ENCODE measurements at regions of chr10 and their contacts with region 1.

Region 1: DNA sequence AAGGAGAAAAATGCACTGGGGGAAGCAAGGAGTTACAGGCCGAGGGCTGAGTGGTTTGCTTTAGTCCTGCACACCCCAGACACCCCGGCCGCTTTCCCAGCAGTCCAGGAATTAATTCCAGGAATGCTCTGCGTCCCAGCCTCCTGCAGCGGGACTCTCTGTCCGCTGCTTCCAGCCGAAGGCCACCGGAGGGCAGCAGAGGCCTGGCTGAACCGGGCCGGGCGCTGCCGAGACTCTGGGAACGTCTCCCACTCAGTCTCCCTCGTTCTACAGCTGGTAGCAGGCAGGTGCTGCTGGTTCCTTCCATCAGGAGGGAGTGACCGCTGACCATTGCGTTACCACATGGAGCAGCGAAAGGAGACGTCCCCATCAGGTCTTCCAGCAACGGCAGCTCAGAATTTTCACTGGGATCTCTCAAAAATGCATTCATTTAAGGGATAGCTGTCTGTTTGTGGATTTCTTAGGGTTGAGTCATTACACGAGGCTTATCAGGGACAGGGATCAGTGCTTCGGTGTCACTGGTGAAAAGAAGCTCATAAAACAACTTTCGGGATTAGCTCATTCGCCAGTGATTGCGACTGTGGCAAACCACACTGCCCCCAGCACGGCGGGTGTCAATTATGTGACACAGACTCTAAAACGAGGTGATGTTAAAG is 24.9 kb upstream of the PITRM1 start:
- DNase-seq: peak; percentile 92
- H3K4me3 ChIP-seq: peak overlapping the region; percentile 26 to 64
- H3K27ac ChIP-seq: peak overlapping the region; percentile 59 to 84
- H3K4me1 ChIP-seq: peaks cover 11 to 12% of the 10 kb centered on the region in 2 experiments
- H3K27me3 ChIP-seq: no peaks in the 10 kb centered on the region
- CTCF ChIP-seq: peak; percentile 92
- EP300 ChIP-seq: peak in 1 of 2 experiments; percentile 92; a peak in 2 of 4 replicates
- RAD21 ChIP-seq: peak; percentile 95

Region 2: GRCh38 chr10:3180355-3181025 is 17.0 kb before region 1 on chr10:
- CTCF ChIA-PET with region 1: interaction called, 12 read pairs
- POLR2A ChIA-PET with region 1: no interaction called
- DNase-seq: no peak
- H3K4me3 ChIP-seq: no peak overlapping the region
- H3K27ac ChIP-seq: no peak overlapping the region
- H3K4me1 ChIP-seq: no peaks in the 10 kb centered on the region
- H3K27me3 ChIP-seq: no peaks in the 10 kb centered on the region; the same call in 1 of the 2 replicates
- CTCF ChIP-seq: no peak
- EP300 ChIP-seq: no peak
- RAD21 ChIP-seq: no peak

Region 3: DNA sequence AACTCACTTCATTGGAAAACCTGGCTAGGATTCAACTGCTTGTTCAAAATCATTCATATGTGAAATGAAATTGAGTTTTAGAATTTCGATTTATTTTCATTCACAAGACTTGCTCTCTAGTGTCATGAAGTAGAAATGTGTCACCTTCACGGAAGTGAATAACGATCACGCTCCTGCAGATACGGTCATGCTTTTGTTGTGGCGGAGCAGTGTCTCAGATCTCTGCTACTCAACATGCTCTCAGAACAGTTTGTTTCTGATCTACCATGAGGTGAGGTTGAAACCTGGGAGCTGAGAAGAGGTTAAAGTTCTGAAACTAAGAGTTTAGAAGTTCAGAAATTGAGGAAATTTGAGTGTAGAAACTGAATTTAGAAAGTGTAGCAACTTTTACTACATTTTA is 11.1 kb before region 1 on chr10:
- CTCF ChIA-PET with region 1: interaction called, 12 read pairs
- POLR2A ChIA-PET with region 1: no interaction called
- DNase-seq: no peak
- H3K4me3 ChIP-seq: no peak overlapping the region
- H3K27ac ChIP-seq: no peak overlapping the region
- H3K4me1 ChIP-seq: no peaks in the 10 kb centered on the region
- H3K27me3 ChIP-seq: no peaks in the 10 kb centered on the region; the same call in 1 of the 2 replicates
- CTCF ChIP-seq: no peak
- EP300 ChIP-seq: no peak
- RAD21 ChIP-seq: no peak

Region 4: GRCh38 chr10:3213208-3213607 is 15.7 kb after region 1 on chr10:
- CTCF ChIA-PET with region 1: interaction called, 21 read pairs
- POLR2A ChIA-PET with region 1: no interaction called
- DNase-seq: no peak
- H3K4me3 ChIP-seq: no peak overlapping the region
- H3K27ac ChIP-seq: no peak overlapping the region
- H3K4me1 ChIP-seq: no peaks in the 10 kb centered on the region
- H3K27me3 ChIP-seq: no peaks in the 10 kb centered on the region
- CTCF ChIP-seq: no peak
- EP300 ChIP-seq: no peak
- RAD21 ChIP-seq: no peak

Region 5: DNA sequence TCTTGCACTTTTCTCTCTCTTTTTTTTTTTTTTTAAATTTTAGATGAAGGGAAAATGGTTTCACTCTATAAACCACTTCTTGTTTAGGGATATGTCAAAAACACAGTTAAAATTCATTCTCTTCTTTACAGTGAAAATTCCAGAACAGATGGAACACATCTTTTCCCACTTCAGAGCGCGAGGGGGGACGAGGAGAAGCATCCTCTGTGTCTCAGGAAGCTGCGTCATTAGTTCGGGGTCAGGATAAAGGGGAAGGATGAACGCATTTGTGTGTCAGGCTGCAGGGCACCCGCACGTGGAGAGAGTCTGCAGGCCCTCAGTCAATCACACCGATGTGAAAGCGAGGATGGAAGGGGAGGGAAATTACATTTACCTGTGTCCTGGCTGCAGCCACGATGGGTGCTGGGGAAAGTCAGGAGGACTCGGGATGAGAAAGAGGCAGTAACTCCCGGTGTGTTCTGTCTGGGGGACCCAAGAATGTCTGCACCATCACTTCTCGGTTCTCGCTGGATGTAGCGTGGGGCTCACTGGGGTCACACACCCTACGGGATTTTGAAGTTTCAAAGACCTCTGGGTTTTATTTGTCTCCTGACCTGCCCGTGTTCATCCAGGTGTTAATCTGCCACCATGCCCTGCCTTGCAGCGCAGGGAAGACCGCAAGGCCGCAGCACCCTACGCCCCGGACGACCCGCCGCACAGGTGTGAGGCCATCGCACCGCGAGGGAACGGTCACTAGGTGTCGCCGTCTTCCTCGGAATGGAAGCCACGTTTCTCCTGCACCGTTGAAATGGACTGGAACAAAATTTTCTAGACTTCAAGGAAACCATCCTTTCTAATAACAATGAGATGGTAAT is 41.8 kb after region 1 on chr10:
- CTCF ChIA-PET with region 1: interaction called, 12 read pairs
- POLR2A ChIA-PET with region 1: no interaction called
- DNase-seq: peak; percentile 81
- H3K4me3 ChIP-seq: no peak overlapping the region; a peak in 1 of 4 replicates
- H3K27ac ChIP-seq: no peak overlapping the region
- H3K4me1 ChIP-seq: no peaks in the 10 kb centered on the region; a peak in 1 of 4 replicates
- H3K27me3 ChIP-seq: no peaks in the 10 kb centered on the region
- CTCF ChIP-seq: peak; percentile 81
- EP300 ChIP-seq: no peak
- RAD21 ChIP-seq: peak; percentile 96

Region 6: DNA sequence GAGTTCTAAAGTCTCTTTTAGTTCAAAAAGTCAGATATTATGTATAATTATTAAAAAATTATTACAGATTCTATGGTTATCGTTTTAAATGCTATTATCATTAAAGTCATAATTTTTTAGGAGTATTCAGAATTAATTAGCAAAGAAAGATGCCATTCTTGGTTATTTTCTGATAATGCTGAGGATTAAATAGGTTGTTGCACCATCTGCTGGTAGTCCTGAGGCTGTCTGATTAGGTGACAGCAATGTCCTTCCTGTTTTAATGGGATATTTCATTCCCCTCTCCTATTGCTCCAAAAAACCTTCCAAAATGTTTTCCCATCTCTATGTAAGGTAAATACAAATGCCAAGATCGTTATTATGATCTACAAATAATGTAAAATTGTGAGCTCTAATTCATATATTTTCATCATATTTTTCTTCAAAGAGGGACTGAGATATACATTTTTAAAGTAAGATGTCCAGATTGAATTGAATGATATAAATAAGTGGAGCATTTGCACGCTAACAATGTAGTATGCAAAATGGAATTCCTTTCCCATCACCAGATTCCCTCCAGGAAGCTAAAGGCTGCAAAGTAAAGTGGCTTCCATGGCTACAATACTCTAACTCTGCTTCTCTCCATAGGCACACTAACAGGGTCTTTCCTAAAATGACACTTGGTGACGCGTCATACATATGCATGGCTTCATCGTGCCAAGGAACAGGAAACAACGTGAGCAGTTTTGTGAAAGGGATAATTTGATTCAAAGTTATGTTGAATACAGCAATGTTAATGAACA is 1569.7 kb after region 1 on chr10:
- CTCF ChIA-PET with region 1: interaction called, 244 read pairs
- POLR2A ChIA-PET with region 1: no interaction called
- DNase-seq: peak; percentile 31
- H3K4me3 ChIP-seq: no peak overlapping the region
- H3K27ac ChIP-seq: peak overlapping the region; percentile 78 to 100
- H3K4me1 ChIP-seq: peaks cover 11 to 62% of the 10 kb centered on the region in 2 experiments
- H3K27me3 ChIP-seq: no peaks in the 10 kb centered on the region
- CTCF ChIP-seq: peak; percentile 86
- EP300 ChIP-seq: no peak
- RAD21 ChIP-seq: peak; percentile 89

Measured in SK-N-SH (cell line).